PC-3 (cell line): ENCODE measurements at regions of chr7 and their contacts with region 1.

Region 1: DNA sequence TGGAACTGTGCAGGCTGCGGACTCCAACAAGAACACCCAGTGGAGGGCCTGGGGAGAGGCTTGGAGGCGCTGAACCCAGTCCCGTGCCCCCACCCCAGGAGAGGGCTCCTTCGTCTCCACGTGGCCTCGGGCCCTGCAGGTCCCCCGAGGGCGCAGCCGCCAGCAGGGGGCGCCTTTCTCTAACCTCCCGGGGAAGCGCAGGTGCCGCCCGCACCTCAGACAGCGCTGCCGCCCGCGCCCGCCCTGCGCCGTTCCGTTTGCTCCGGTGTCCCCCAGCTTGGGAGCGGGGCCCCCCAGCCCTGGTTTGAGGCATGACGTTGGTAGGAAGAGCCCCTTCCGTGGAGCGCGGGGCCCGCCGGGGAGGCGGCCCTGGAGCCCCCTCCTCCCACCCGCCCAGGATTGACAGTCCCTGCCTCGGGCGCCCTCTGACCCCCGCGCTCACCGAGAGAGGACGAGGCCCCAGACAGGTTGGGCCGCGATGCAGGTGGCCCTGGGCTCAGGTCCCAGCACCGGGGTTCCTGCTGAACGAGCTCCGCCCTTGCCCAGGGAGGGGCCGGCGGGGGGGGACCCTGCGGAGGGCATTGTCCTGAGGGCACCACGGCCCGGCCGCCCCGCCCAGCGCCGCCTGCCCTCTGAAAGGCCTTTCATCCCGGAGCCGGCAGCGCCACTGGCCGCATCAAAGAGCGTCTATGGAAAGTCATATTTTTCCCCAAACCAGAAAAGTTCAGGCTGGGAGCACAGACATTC is 42.8 kb downstream of the FOXL3 start:
- DNase-seq: peak; percentile 80
- ATAC-seq: peak; percentile 93
- H3K4me3 ChIP-seq: peak overlapping the region; percentile 69
- H3K27ac ChIP-seq: no peak overlapping the region
- H3K4me1 ChIP-seq: peaks cover 7% of the 10 kb centered on the region
- H3K27me3 ChIP-seq: no peaks in the 10 kb centered on the region
- CTCF ChIP-seq: peak; percentile 78

Region 2: DNA sequence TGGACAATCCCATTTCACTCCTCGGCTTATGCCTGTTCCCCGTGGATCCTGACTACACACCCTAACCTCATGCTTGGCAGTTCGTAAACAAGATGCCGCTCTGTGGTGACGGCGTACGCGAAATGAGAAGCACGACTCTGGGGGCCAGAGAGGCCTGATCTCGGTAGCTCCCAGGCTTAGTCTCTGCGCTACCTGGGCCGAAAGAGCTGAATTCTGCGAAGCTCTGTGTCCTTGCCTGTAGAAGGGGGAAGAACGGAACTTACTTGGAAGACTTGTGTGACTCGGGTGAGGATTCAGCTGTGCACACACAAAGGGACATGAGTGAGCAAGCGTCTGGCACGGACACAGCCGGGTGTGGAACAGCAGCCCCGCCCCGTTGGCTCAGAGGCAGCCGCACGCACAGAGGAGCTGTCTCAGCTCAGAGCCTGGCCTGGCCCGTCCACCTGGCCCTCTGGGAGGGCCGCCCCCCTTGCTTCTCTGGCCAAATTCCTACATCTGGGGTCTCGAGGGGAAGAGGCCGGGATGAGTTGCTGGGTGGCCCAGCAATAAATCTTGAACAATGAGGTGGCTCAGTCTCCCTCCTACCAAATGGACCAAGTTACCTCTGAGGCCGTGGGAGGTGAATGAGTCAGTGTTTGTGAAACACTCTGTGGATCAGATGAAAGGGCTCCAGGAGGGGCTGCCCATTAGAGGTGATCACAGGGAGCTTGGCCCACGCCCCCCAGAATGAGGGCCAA is 103.0 kb after region 1 on chr7:
- CTCF ChIA-PET with region 1: interaction called, 5 read pairs
- POLR2A ChIA-PET with region 1: interaction called, 14 read pairs
- intact Hi-C with region 1: loop called (anchors 2 kb)
- DNase-seq: peak; percentile 82
- ATAC-seq: peak; percentile 89
- H3K4me3 ChIP-seq: peak overlapping the region; percentile 61
- H3K27ac ChIP-seq: peak overlapping the region; percentile 71
- H3K4me1 ChIP-seq: peaks cover 19% of the 10 kb centered on the region
- H3K27me3 ChIP-seq: no peaks in the 10 kb centered on the region
- CTCF ChIP-seq: no peak

Region 3: DNA sequence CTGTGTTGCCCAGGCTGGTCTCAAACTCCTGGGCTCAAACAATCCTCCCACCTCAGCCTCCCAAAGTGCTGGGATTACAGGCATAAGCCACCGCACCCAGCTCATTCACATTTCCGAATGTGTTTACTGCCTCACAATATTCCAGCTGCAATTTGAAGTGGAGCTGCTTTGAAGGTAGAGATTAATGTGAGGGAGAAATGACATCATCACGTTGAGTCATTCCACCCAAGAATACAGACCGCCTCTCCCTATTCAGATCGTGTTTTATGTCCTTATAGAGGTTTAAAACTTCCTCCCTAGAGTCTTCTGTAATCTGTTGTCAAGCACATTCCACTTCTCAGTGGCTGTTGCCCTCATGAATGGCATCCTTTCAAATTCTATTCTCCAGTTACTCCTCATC is 287.2 kb after region 1 on chr7:
- CTCF ChIA-PET with region 1: no interaction called
- POLR2A ChIA-PET with region 1: no interaction called
- intact Hi-C with region 1: no loop called
- DNase-seq: peak; percentile 39
- ATAC-seq: peak; percentile 82
- H3K4me3 ChIP-seq: no peak overlapping the region
- H3K27ac ChIP-seq: no peak overlapping the region
- H3K4me1 ChIP-seq: peaks cover 10% of the 10 kb centered on the region
- H3K27me3 ChIP-seq: no peaks in the 10 kb centered on the region
- CTCF ChIP-seq: no peak

Region 4: DNA sequence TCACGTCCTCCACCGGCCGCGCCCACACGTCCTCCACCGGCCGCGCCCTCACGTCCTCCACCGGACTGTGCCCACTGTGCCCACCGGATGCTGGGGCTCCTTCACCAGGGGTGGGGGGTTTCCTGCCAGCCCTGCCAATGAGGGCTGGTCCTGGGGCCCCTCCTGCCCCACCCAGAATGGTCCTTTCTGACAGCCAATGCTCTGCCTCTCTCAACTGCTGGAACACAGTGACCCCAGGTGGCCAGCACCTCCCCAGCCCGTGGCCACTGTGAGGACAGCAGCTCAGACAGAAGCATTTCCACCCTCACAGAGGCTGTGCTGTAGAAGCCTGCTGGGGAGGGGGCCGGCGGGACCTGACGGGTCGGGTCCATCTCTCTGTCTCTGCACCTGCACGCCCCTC is 303.6 kb after region 1 on chr7:
- CTCF ChIA-PET with region 1: interaction called, 8 read pairs
- POLR2A ChIA-PET with region 1: interaction called, 4 read pairs
- intact Hi-C with region 1: loop called (anchors 1 kb)
- DNase-seq: peak; percentile 71
- ATAC-seq: peak; percentile 86
- H3K4me3 ChIP-seq: peak overlapping the region; percentile 70
- H3K27ac ChIP-seq: peak overlapping the region; percentile 61
- H3K4me1 ChIP-seq: peaks cover 15% of the 10 kb centered on the region
- H3K27me3 ChIP-seq: no peaks in the 10 kb centered on the region
- CTCF ChIP-seq: peak; percentile 75

Region 5: GRCh38 chr7:816300-816750 is 483.5 kb after region 1 on chr7:
- CTCF ChIA-PET with region 1: no interaction called
- POLR2A ChIA-PET with region 1: interaction called, 10 read pairs
- intact Hi-C with region 1: no loop called
- DNase-seq: peak; percentile 98
- ATAC-seq: peak; percentile 87
- H3K4me3 ChIP-seq: peak overlapping the region; percentile 84
- H3K27ac ChIP-seq: no peak overlapping the region
- H3K4me1 ChIP-seq: peaks cover 40% of the 10 kb centered on the region
- H3K27me3 ChIP-seq: no peaks in the 10 kb centered on the region
- CTCF ChIP-seq: no peak